AG04449 (cell line): ENCODE measurements at regions of chr7 and their contacts with region 1.

Region 1: GRCh38 chr7:27160546-27161213 is 4.2 kb upstream of the HOXA7 start:
- DNase-seq: no peak
- H3K4me3 ChIP-seq: peak overlapping the region; percentile 75
- CTCF ChIP-seq: peak; percentile 100

Region 2: DNA sequence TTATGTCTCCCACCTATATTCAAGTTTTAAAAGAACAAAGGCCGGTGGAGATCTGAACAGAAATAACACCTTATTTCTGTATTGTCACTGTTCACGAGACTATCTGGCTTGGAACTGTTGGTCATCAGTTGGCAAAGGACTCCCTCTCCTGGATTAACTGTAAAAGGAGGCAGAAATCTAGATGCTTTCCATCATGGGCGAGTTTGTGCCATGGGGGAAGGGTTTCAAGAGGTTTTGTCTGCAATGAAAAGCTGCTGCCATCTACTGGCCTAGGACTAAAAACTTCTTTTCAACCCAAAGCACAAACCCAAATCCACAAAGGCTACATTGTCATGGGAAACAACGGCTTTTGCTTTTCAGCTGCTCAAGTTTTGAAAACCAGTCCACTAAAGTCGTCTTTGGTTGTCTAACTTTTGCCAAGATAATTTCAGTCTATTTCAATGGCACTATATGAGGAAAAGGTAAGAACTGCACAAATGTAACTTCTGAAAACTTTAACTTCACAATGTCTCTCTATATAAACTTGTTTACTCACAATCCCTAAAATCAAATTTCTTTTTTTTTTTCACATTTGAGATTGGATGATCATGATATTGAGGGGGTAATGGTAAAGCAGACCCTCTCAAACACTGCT is 493.1 kb before region 1 on chr7:
- CTCF ChIA-PET with region 1: interaction called, 15 read pairs
- POLR2A ChIA-PET with region 1: no interaction called
- DNase-seq: peak; percentile 59
- H3K4me3 ChIP-seq: no peak overlapping the region
- CTCF ChIP-seq: peak; percentile 78

Region 3: DNA sequence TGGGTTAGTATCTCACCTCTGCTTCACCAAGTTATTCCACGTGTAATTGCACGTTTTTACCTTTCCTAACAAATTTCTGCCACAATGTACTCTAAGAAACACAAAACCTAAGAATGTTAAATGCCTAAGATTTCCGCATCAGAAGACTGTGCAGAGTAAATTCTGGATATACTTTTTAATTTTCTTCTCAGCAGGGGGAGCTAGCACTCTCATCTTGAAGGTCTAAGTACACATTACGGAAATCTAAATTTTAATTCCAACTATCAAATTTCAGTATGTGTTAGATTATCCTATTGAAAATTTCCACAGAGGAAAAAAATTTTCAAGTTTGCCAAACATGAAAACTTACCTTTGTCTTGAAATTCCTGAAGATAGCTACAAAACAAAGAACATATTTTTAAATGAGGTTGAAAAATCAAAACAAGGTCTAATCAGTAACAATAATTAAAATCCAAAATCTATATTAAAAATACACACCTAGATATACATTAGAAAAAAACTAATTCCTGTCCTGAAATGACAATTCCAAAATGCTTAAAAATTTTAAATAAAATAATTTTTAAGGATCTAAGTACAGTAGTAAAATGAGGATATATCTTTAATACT is 306.8 kb before region 1 on chr7:
- CTCF ChIA-PET with region 1: interaction called, 48 read pairs
- POLR2A ChIA-PET with region 1: no interaction called
- DNase-seq: no peak
- H3K4me3 ChIP-seq: no peak overlapping the region
- CTCF ChIP-seq: peak; percentile 29

Region 4: DNA sequence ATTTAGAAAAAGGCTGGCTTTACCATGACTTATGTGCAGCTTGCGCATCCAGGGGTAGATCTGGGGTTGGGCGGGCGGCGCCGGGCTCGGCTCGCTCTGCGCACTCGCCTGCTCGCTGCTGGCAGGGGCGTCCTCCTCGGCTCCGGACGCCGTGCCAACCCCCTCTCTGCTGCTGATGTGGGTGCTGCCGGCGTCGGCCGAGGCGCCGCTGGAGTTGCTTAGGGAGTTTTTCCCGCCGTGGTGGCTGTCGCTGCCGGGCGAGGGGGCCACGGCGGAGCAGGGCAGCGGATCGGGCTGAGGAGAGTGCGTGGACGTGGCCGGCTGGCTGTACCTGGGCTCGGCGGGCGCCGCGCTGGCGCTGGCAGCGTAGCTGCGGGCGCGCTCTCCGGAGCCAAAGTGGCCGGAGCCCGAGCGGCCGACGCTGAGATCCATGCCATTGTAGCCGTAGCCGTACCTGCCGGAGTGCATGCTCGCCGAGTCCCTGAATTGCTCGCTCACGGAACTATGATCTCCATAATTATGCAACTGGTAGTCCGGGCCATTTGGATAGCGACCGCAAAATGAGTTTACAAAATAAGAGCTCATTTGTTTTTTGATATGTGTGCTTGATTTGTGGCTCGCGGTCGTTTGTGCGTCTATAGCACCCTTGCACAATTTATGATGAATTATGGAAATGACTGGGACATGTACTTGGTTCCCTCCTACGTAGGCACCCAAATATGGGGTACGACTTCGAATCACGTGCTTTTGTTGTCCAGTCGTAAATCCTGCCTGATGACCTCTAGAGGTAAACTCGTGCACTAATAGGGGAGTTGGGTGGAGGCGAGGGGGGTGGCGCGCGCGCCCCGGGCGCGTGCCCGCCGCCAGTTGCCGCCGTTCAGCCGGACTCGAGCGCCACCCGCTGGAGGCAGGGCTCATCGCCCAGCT is 17.4 kb before region 1 on chr7 and contains the start of gene HOXA5:
- CTCF ChIA-PET with region 1: interaction called, 38 read pairs
- POLR2A ChIA-PET with region 1: no interaction called
- DNase-seq: no peak
- H3K4me3 ChIP-seq: peak within 1 kb of the TSS; percentile 48
- CTCF ChIP-seq: peak; percentile 59

Region 5: DNA sequence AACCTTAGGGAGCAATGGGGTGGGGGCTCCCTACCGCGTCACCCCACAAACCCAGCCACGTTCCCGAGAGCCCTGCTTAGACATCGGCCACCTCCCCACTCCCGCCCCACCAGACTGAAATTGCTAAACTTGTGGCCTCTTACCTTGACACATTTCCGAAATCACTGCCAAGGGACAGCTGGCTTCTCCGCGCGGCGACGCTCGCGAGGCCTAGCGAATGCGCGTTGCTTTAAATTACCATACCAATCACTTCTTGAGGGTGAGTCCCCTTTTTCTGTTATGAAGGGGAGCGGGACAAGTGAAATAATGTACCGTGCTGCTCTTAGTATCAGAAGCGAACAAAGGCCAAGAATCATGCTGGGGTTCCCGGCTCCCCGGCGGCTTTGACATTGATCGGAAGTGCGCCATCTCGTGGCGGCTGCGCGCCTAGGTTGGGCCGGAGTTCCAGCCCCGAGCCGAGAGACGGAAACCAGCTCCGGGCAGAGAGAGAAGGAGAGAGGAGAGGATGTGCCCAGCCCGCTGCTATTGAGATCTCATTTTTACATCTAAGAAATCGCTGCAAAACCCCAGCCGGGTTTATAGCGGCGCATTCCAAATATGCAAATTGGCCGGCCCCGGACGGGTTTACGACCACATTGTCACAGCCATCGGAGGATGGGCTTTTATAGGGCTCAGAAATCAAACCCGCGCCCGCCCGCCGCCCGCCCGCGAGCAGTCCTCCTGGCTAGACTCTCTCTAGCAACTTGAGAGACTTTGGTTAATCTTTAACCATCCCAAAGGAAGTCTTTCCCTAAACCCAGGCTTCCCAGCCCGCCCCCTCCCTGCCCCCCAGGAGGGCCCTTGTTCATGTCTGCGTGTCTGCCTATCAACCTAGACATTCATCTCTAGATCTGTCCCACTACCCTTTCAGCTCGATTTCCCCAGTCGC is 19.1 kb after region 1 on chr7:
- CTCF ChIA-PET with region 1: interaction called, 117 read pairs
- POLR2A ChIA-PET with region 1: interaction called, 33 read pairs
- DNase-seq: no peak
- H3K4me3 ChIP-seq: peak overlapping the region; percentile 75
- CTCF ChIP-seq: peak; percentile 97

Region 6: DNA sequence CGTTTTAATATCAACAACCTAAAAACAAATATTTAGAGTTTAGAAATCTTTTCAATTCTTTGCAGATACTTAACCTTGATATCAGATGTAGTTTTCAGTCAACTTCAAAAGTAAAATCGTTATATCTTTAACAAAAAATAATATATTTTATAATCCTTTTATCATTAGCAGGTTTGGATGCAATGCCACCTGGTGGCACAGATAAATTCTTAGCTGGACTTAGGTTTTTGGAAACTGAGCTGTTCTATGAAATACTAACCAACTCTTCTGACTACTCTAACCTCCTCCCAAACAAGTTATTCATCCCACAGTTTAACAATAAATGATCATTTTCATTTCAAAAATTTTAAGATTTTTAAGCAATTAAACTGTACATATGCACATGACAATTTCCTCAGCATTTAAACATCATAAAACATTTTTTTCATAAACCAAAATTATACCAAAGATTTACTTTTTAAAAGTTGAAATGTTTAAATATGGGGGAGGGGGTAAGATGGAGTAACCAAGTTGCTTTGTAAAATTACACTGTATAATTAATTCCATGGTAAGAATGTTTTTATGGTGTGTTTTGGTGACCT is 445.1 kb after region 1 on chr7:
- CTCF ChIA-PET with region 1: no interaction called
- POLR2A ChIA-PET with region 1: no interaction called
- DNase-seq: no peak
- H3K4me3 ChIP-seq: no peak overlapping the region
- CTCF ChIP-seq: no peak